A549 (cell line): ENCODE measurements at regions of chr11 and their contacts with region 1.

Region 1: DNA sequence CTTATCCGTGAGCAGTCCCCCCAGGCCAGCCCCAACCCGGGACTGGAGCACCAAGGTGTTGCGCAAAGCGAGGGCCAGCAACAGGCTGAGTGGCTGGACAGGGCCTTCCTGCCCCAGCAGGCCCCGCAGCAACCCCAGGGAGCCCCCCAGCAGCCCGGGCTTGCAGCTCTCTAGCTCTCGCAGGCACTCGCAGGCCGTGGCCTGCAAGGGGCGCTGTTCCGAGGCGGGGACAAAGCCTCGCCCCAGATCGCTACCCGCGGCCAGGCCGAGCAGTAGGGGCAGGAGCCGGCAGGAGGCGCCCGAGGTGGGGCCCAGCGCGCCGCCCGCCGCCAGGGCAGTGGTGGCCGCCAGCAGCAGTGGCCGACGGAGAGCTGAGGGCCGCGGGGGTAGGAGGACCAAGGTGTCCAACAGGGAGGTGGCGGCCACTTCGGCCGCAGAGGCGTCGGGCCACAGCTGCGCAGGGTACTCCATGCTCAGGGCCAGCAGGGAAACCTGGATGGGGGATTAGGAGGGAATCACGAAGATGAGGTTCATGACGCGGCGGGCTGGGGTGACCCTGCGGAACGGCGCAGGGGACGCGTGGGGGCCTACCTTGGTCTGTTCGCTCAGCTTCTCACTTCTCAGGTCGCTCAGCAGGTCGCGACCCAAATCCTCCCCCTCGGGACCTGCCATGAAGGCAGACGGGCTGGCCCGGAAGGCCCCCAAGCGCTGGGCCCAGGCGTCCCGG is 762 bp downstream of the AP5B1 start:
- DNase-seq: peak; percentile 76 to 88
- ATAC-seq: peak; percentile 81 to 92
- H3K4me3 ChIP-seq: peak overlapping the region; percentile 98
- H3K27ac ChIP-seq: peak overlapping the region; percentile 93 to 98
- H3K4me1 ChIP-seq: peaks cover 11% of the 10 kb centered on the region
- CTCF ChIP-seq: peak; percentile 96
- EP300 ChIP-seq: no peak
- POLR2A ChIP-seq: peak; percentile 49
- RAD21 ChIP-seq: peak; percentile 29 to 66; a peak in 4 of 5 replicates

Region 2: GRCh38 chr11:65425105-65425970 is 354.7 kb before region 1 on chr11:
- CTCF ChIA-PET with region 1: no interaction called
- POLR2A ChIA-PET with region 1: no interaction called
- DNase-seq: peak in 1 of 2 experiments; percentile 87
- ATAC-seq: no peak
- H3K4me3 ChIP-seq: peak overlapping the region; percentile 95
- H3K27ac ChIP-seq: peak overlapping the region; percentile 97 to 100
- H3K4me1 ChIP-seq: peaks cover 18% of the 10 kb centered on the region
- CTCF ChIP-seq: no peak
- EP300 ChIP-seq: no peak
- POLR2A ChIP-seq: no peak
- RAD21 ChIP-seq: no peak

Region 3: DNA sequence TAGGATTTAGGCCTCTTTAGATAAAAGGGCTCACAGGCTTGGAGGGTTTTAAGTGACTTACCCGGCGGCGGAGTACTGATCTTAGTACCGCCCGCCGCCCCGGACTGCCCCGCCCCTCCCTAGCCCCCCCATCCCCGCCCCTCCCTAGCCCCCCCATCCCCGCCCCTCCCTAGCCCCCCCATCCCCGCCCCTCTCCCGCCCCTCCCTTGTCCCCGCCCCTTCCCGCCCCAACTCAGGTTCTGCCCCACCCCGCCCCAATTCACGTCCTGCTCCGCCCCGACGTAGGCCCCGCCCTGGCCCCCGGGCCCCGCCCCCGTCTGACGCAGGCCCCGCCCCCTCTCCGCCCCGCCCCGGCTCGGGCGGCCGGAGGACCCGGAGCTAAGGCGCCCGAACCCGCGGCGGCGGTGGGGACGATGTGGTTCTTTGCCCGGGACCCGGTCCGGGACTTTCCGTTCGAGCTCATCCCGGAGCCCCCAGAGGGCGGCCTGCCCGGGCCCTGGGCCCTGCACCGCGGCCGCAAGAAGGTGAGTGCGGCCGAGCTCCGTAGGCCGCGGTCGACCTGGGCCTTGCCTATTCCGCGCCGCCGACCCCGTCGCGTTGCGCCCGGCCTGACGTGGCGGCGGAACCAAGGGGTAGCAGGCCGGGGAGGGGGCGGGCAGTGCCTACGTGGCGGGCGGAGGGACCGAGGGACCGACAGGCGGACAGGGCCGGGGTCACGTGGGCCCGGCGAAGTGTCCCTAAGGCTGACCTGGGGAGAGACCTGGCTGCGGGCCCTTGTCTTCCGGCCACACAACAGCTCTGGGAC is 255.1 kb before region 1 on chr11 and contains the start of gene SCYL1:
- CTCF ChIA-PET with region 1: no interaction called
- POLR2A ChIA-PET with region 1: no interaction called
- DNase-seq: peak; percentile 53 to 81
- ATAC-seq: peak; percentile 77 to 80
- H3K4me3 ChIP-seq: peak within 1 kb of the TSS; percentile 94
- H3K27ac ChIP-seq: peak within 1 kb of the TSS; percentile 90 to 99
- H3K4me1 ChIP-seq: peaks cover 18% of the 10 kb centered on the region
- CTCF ChIP-seq: no peak
- EP300 ChIP-seq: no peak
- POLR2A ChIP-seq: peak; percentile 44; the same call in 1 of the 2 replicates
- RAD21 ChIP-seq: no peak
- polyA plus RNA-seq, gene SCYL1: 30.8 and 33.6 TPM in 2 replicates

Region 4: GRCh38 chr11:65720237-65720934 is 59.6 kb before region 1 on chr11 and contains the start of gene RNASEH2C:
- CTCF ChIA-PET with region 1: interaction called, 65 read pairs
- POLR2A ChIA-PET with region 1: interaction called, 7 read pairs
- DNase-seq: peak; percentile 89
- ATAC-seq: peak; percentile 82 to 93
- H3K4me3 ChIP-seq: peak within 1 kb of the TSS; percentile 67
- H3K27ac ChIP-seq: peak within 1 kb of the TSS; percentile 77 to 96
- H3K4me1 ChIP-seq: peaks cover 9% of the 10 kb centered on the region
- CTCF ChIP-seq: no peak
- EP300 ChIP-seq: no peak
- POLR2A ChIP-seq: peak; percentile 95
- RAD21 ChIP-seq: no peak
- polyA plus RNA-seq, gene RNASEH2C: 15.1 and 15.8 TPM in 2 replicates

Region 5: DNA sequence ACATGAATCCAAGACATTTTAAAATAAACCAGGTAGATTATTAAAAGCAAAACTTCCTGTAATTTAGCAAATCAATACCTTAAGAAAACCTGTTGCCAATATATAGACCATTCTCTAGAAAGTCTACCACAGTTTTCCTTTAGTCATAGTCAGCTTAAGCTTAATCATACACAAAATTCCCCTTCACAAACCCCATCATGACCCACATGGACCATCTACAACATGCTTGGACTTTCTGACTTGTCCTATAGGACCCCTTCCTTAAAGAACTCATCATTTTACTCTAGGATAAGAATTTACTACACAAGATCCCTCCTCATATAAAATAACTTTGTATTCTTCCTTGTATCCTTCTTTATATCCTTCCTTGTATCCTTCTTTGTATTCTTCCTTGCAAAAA is 43.2 kb before region 1 on chr11:
- CTCF ChIA-PET with region 1: interaction called, 10 read pairs
- POLR2A ChIA-PET with region 1: no interaction called
- DNase-seq: no peak
- ATAC-seq: no peak
- H3K4me3 ChIP-seq: no peak overlapping the region
- H3K27ac ChIP-seq: no peak overlapping the region
- H3K4me1 ChIP-seq: no peaks in the 10 kb centered on the region
- CTCF ChIP-seq: no peak
- EP300 ChIP-seq: no peak
- POLR2A ChIP-seq: no peak
- RAD21 ChIP-seq: no peak

Region 6: GRCh38 chr11:65766535-65766934 is 13.5 kb before region 1 on chr11:
- CTCF ChIA-PET with region 1: interaction called, 46 read pairs
- POLR2A ChIA-PET with region 1: no interaction called
- DNase-seq: no peak
- ATAC-seq: no peak
- H3K4me3 ChIP-seq: no peak overlapping the region
- H3K27ac ChIP-seq: no peak overlapping the region
- H3K4me1 ChIP-seq: peaks cover 9% of the 10 kb centered on the region; the same call in 2 of the 3 replicates
- CTCF ChIP-seq: no peak
- EP300 ChIP-seq: no peak
- POLR2A ChIP-seq: no peak
- RAD21 ChIP-seq: no peak

Region 7: DNA sequence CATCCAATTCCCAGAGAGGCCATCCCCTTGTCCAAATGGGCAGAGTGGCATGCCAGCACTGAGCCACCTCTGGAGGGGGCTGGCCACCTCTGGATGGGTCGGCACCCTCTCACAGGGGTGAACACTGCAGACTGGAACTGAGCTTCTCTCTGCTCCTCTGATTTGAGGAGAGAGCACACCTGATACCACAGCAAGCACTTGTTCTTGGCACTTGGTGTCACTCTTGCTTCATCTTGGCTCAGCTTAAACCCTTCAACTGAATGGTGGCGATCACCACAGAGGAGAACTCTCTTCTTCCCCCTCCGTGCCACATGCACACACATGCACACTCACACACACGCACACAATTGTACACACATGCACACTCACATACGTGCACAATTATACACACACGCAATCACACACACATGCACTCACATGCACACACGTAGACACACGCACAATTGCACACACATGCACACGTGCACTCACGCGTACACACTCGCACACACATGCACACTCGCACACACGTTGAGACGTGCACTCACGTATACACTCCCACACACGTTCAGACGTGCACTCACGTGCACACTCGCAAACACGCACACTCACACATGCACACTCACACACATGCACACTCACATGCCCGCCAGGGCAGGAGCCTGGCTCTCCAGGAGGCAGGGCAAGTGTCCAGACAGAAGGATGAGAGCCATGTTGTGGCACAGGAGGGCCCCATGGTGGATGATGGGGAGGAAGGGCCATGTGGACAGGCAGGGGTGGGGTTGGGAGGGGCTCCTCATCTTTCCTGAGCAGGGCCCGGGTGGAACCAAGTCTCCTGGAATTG is 30.2 kb after region 1 on chr11:
- CTCF ChIA-PET with region 1: interaction called, 173 read pairs
- POLR2A ChIA-PET with region 1: interaction called, 4 read pairs
- DNase-seq: peak in 1 of 2 experiments; percentile 32
- ATAC-seq: peak; percentile 54 to 68; a peak in 3 of 6 replicates
- H3K4me3 ChIP-seq: no peak overlapping the region
- H3K27ac ChIP-seq: no peak overlapping the region
- H3K4me1 ChIP-seq: no peaks in the 10 kb centered on the region
- CTCF ChIP-seq: no peak
- EP300 ChIP-seq: no peak
- POLR2A ChIP-seq: 0 out of 2 replicates have a peak, but pooled peaks have one; percentile 4
- RAD21 ChIP-seq: peak in 1 of 2 experiments; percentile 25; a peak in 2 of 5 replicates

Region 8: DNA sequence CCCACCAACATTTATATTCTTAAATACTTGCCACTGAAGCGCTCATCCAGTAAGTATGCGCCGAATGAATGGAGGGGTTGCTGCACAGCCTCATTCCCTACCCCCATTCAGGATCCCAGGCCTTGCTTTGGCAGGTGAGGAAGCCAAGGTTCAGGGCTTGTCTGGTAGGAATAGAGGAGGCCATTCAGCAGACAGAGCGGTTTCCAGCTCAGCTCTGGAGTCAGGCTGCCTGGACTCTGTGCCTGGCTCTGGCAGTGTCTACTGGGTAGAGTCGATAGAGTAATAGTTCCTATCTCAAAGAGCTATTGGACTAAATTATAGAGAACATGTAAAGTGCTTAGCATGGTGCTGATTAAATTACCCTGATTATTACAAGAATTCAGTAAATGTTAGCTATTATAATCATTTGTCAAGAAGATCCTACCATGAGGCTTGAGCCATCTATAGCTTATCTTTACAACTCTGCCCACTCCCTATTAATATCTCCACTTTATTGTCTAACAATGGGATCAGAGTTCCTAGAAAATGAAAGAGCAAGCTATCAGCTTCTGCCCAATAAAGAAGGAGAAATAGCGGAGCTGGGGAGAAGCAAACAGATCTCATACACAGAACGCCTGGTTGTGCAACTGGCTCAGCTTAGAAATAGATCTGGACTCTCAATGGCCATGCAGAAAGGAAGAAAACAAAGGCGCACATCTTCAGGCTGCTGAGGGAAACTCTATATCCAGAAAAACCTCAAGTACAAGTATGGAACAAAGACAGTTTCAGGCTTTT is 47.1 kb after region 1 on chr11:
- CTCF ChIA-PET with region 1: interaction called, 19 read pairs
- POLR2A ChIA-PET with region 1: no interaction called
- DNase-seq: no peak
- ATAC-seq: no peak
- H3K4me3 ChIP-seq: no peak overlapping the region
- H3K27ac ChIP-seq: no peak overlapping the region
- H3K4me1 ChIP-seq: no peaks in the 10 kb centered on the region
- CTCF ChIP-seq: no peak
- EP300 ChIP-seq: no peak
- POLR2A ChIP-seq: no peak
- RAD21 ChIP-seq: no peak

Region 9: GRCh38 chr11:65903068-65903481 is 123.1 kb after region 1 on chr11:
- CTCF ChIA-PET with region 1: no interaction called
- POLR2A ChIA-PET with region 1: no interaction called
- DNase-seq: peak; percentile 85 to 90
- ATAC-seq: peak; percentile 47 to 57
- H3K4me3 ChIP-seq: no peak overlapping the region
- H3K27ac ChIP-seq: peak overlapping the region; percentile 69 to 87
- H3K4me1 ChIP-seq: peaks cover 39% of the 10 kb centered on the region
- CTCF ChIP-seq: no peak
- EP300 ChIP-seq: peak in 1 of 2 experiments; percentile 60; a peak in 1 of 5 replicates
- POLR2A ChIP-seq: no peak
- RAD21 ChIP-seq: no peak